Activated CD4-positive, alpha-beta memory T cell treated with anti-CD3 and anti-CD28 coated beads for 36 hours (primary cell): ENCODE measurements at regions of chr2 and their contacts with region 1.

Region 1: GRCh38 chr2:137838255-137839092 is 125.8 kb upstream of the HNMT start:
- DNase-seq: no peak
- H3K4me3 Mint-ChIP-seq: no peak overlapping the region
- H3K27ac Mint-ChIP-seq: no peak overlapping the region
- H3K4me1 Mint-ChIP-seq: no peaks in the 10 kb centered on the region
- H3K27me3 Mint-ChIP-seq: peaks cover 4% of the 10 kb centered on the region

Region 2: DNA sequence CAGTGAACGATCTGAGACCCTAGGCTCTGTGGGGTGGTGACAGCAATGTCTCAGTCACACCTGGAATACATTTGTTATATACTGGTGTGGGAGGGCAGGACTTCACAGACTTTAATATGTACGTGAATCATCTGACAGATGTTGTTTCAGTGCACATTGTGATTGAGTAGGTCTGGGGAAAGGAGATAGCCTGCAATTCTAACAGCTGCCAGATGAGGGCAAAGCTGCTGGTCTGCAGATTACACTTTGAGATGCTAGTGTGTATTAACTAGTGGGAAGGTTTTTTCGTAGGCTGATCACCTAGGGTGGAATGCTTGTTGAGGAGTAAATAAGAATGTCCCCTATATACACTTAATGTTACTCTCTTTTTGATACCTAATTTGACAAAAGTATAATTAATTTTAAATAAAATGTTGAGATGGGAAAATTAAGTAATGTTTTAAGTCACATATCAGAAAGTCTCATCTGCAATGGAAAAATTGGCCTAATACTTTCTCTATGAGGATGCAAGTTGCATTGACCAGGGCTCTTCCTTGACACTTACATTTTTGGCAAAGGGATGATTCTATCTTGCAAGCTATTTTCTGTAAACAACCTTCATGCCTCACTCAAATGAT is 371.1 kb before region 1 on chr2:
- CTCF ChIA-PET with region 1: interaction called, 13 read pairs
- POLR2A ChIA-PET with region 1: no interaction called
- intact Hi-C with region 1: loop called (anchors 1 kb)
- DNase-seq: peak; percentile 18
- H3K4me3 Mint-ChIP-seq: no peak overlapping the region
- H3K27ac Mint-ChIP-seq: no peak overlapping the region
- H3K4me1 Mint-ChIP-seq: no peaks in the 10 kb centered on the region
- H3K27me3 Mint-ChIP-seq: no peaks in the 10 kb centered on the region

Region 3: GRCh38 chr2:137525641-137526190 is 312.8 kb before region 1 on chr2:
- CTCF ChIA-PET with region 1: no interaction called
- POLR2A ChIA-PET with region 1: no interaction called
- intact Hi-C with region 1: no loop called
- DNase-seq: no peak
- H3K4me3 Mint-ChIP-seq: no peak overlapping the region
- H3K27ac Mint-ChIP-seq: no peak overlapping the region
- H3K4me1 Mint-ChIP-seq: no peaks in the 10 kb centered on the region
- H3K27me3 Mint-ChIP-seq: no peaks in the 10 kb centered on the region

Region 4: GRCh38 chr2:137862651-137863050 is 24.2 kb after region 1 on chr2:
- CTCF ChIA-PET with region 1: no interaction called
- POLR2A ChIA-PET with region 1: no interaction called
- intact Hi-C with region 1: no loop called
- DNase-seq: no peak
- H3K4me3 Mint-ChIP-seq: no peak overlapping the region
- H3K27ac Mint-ChIP-seq: no peak overlapping the region
- H3K4me1 Mint-ChIP-seq: no peaks in the 10 kb centered on the region
- H3K27me3 Mint-ChIP-seq: peaks cover 5% of the 10 kb centered on the region

Region 5: DNA sequence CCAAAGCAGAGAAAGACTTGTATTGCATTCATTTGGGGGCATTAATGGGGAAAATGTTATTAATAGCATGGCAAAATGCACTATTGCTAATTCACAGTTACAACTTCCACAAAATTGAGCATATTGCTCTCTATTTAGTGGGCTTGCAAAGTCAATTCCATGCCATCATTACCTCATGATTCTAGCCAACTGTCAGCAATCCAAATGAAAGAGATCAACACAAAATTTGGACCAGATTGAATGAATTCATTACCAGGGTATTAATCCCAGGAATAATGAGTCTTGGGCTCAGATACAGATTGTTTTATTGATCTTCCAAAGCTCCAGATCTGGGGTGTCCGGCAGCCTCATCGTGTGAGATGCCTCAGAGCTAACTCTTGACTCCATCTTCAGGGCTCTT is 903.4 kb after region 1 on chr2:
- CTCF ChIA-PET with region 1: no interaction called
- POLR2A ChIA-PET with region 1: no interaction called
- intact Hi-C with region 1: no loop called
- DNase-seq: no peak
- H3K4me3 Mint-ChIP-seq: no peak overlapping the region
- H3K27ac Mint-ChIP-seq: no peak overlapping the region
- H3K4me1 Mint-ChIP-seq: no peaks in the 10 kb centered on the region
- H3K27me3 Mint-ChIP-seq: no peaks in the 10 kb centered on the region